Activated naive CD4-positive, alpha-beta T cell treated with anti-CD3 and anti-CD28 coated beads for 36 hours (primary cell): ENCODE measurements at regions of chr1 and their contacts with region 1.

Region 1: DNA sequence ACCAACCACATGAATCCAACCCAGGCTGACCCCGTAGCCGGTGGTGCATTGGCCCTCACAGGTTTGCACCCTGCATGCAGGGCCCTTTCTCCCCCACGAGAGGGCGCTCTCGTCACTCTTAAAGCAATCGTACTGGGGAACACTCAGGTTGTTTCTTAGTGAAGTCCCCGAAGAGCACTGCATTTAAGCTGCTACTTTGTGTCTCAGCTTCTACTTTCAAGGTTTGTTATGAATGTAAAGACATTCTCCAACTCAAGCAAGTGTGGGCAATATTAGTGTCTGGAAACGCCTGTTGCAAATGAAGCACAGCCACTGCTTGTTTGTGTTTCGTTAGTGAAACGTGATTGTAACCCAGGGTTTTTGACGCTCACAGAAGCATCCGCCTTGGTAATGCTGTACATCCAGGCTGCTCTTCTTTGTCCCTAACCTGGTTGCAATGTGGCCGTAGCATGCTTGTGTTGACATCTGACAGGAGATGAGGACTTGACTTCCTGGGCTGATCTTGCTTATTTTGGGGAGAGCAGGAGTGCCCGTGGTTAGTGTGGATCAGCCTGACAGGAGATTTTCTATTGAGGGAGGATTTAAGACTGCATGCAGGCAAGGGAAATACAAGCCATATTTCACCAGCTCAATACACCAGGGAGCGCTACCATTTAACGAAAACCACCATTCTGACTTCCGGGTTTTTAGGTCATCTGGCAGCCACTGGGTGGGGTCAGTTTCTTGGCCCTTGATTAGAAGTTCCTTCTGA is 79.8 kb downstream of the ST6GALNAC3 start:
- DNase-seq: peak; percentile 90
- H3K4me3 Mint-ChIP-seq: peak overlapping the region; percentile 72
- H3K27ac Mint-ChIP-seq: peak overlapping the region; percentile 67
- H3K4me1 Mint-ChIP-seq: peaks cover 12% of the 10 kb centered on the region
- H3K27me3 Mint-ChIP-seq: no peaks in the 10 kb centered on the region

Region 2: GRCh38 chr1:75999034-75999433 is 155.3 kb before region 1 on chr1:
- CTCF ChIA-PET with region 1: no interaction called
- intact Hi-C with region 1: no loop called
- DNase-seq: no peak
- H3K4me3 Mint-ChIP-seq: no peak overlapping the region
- H3K27ac Mint-ChIP-seq: no peak overlapping the region
- H3K4me1 Mint-ChIP-seq: peaks cover 2% of the 10 kb centered on the region
- H3K27me3 Mint-ChIP-seq: no peaks in the 10 kb centered on the region

Region 3: DNA sequence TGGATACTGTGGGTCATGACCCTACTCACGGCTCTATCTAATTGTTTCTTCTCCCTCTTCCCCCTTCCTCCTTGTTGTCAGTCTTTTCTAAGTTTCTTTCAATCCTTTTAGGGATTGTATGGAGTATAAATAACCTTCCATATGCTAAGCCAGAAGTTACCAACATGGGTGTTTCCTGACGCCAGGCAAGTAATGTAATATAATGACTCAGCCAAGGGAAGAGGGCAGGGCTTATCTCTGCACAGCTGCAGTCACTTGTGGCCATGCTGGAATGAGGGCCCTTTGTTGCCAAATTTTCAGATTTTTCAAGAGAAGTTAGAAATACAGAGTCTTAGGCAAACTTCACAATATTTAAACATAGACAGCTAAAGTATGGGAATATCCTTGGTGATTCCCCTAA is 114.8 kb after region 1 on chr1:
- CTCF ChIA-PET with region 1: interaction called, 3 read pairs
- intact Hi-C with region 1: loop called (anchors 1 kb)
- DNase-seq: peak; percentile 47
- H3K4me3 Mint-ChIP-seq: no peak overlapping the region
- H3K27ac Mint-ChIP-seq: peak overlapping the region; percentile 69
- H3K4me1 Mint-ChIP-seq: peaks cover 60% of the 10 kb centered on the region
- H3K27me3 Mint-ChIP-seq: no peaks in the 10 kb centered on the region

Region 4: GRCh38 chr1:76444773-76445172 is 290.4 kb after region 1 on chr1:
- CTCF ChIA-PET with region 1: no interaction called
- intact Hi-C with region 1: loop called (anchors 1 kb)
- DNase-seq: no peak
- H3K4me3 Mint-ChIP-seq: no peak overlapping the region
- H3K27ac Mint-ChIP-seq: no peak overlapping the region
- H3K4me1 Mint-ChIP-seq: peaks cover 29% of the 10 kb centered on the region
- H3K27me3 Mint-ChIP-seq: no peaks in the 10 kb centered on the region

Region 5: GRCh38 chr1:76868154-76868882 is 713.9 kb after region 1 on chr1:
- CTCF ChIA-PET with region 1: no interaction called
- intact Hi-C with region 1: loop called (anchors 2 kb)
- DNase-seq: peak; percentile 40
- H3K4me3 Mint-ChIP-seq: peak overlapping the region; percentile 72
- H3K27ac Mint-ChIP-seq: no peak overlapping the region
- H3K4me1 Mint-ChIP-seq: peaks cover 7% of the 10 kb centered on the region
- H3K27me3 Mint-ChIP-seq: peaks cover 50% of the 10 kb centered on the region

Region 6: DNA sequence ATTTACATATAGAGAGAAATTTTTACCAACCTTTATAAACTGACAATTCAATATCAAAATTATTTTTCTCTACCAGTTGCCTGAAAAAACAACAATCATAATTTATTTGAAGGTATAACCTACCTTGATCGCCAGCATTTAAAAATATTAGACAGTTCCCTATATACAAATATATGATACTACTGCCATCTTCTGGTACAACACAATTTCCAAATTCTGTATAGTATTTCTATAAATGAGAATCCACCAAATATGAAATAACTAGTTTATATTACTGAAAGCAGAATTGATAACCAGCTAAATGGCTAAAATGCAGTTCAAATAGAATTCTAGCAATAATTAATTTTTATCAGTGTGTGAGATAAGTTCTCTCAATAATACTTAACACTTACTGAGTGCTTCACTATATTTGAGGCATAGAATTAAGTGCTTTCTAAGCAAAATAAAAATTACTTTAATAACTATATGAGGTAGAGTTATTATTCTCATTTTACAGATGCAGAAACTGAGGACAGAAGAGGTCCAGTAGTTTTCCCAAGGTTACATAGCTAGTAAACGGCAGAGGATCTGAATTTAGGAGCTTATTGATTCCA is 989.2 kb after region 1 on chr1:
- CTCF ChIA-PET with region 1: interaction called, 3 read pairs
- intact Hi-C with region 1: loop called (anchors 1 kb)
- DNase-seq: no peak
- H3K4me3 Mint-ChIP-seq: no peak overlapping the region
- H3K27ac Mint-ChIP-seq: no peak overlapping the region
- H3K4me1 Mint-ChIP-seq: peaks cover 2% of the 10 kb centered on the region
- H3K27me3 Mint-ChIP-seq: no peaks in the 10 kb centered on the region

Region 7: DNA sequence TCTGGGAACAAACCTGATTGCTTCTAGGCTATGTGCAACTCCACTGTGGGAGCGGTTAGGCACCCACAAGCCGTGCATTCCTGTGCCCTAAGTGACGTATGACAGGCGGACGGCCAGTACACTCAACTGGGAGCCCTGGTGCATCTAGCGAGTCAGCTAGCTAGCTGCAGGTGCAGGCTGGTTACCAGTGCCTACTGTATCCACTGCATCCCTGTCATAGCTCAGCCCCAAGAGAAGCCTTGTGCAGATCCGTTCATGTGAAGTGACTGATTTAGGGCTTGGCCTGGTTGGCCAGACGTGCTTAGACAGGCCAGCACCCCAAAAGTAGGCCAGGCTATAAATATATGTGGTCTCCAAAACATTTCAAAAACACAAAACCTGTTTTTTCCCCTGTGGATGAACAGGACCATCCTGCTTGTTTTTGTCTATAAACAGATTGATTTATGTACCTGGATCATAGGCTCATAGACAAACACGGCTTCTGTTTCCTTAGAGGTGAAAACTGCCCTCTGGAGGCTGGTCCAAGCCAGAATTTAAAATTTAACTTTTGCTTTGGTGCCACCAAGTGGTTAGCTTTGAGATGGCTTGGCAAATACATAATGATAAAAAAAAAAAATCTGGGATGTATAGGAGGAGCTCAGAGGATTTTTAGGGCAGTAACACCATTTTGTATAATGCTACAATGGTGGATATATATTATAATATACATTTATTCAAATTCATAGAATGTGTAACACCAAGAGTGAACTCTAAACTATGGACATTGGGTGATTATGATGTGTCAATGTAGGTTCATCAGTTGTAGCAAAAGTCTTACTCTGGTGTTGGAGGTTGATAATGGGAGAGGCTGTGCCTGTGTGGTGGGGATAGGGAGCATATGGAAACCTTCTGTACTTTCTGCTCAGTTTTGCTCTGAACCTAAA is 1959.9 kb after region 1 on chr1:
- CTCF ChIA-PET with region 1: no interaction called
- intact Hi-C with region 1: loop called (anchors 1 kb)
- DNase-seq: peak; percentile 79
- H3K4me3 Mint-ChIP-seq: no peak overlapping the region
- H3K27ac Mint-ChIP-seq: no peak overlapping the region
- H3K4me1 Mint-ChIP-seq: peaks cover 8% of the 10 kb centered on the region
- H3K27me3 Mint-ChIP-seq: no peaks in the 10 kb centered on the region